A673 (cell line): ENCODE measurements at regions of chr1 and their contacts with region 1.

Region 1: GRCh38 chr1:36083993-36084738 is at the start of gene TEKT2:
- DNase-seq: peak; percentile 84
- H3K4me3 ChIP-seq: peak within 1 kb of the TSS; percentile 57
- H3K27ac ChIP-seq: peak within 1 kb of the TSS; percentile 64
- H3K4me1 ChIP-seq: no peaks in the 10 kb centered on the region
- H3K27me3 ChIP-seq: no peaks in the 10 kb centered on the region
- CTCF ChIP-seq: no peak
- total RNA-seq, gene TEKT2: 2.8 and 4.6 TPM in 2 replicates

Region 2: GRCh38 chr1:36109041-36109679 is 25.0 kb after region 1 on chr1:
- CTCF ChIA-PET with region 1: no interaction called
- POLR2A ChIA-PET with region 1: interaction called, 10 read pairs
- intact Hi-C with region 1: no loop called
- DNase-seq: no peak
- H3K4me3 ChIP-seq: no peak overlapping the region
- H3K27ac ChIP-seq: no peak overlapping the region
- H3K4me1 ChIP-seq: no peaks in the 10 kb centered on the region
- H3K27me3 ChIP-seq: no peaks in the 10 kb centered on the region
- CTCF ChIP-seq: no peak

Region 3: DNA sequence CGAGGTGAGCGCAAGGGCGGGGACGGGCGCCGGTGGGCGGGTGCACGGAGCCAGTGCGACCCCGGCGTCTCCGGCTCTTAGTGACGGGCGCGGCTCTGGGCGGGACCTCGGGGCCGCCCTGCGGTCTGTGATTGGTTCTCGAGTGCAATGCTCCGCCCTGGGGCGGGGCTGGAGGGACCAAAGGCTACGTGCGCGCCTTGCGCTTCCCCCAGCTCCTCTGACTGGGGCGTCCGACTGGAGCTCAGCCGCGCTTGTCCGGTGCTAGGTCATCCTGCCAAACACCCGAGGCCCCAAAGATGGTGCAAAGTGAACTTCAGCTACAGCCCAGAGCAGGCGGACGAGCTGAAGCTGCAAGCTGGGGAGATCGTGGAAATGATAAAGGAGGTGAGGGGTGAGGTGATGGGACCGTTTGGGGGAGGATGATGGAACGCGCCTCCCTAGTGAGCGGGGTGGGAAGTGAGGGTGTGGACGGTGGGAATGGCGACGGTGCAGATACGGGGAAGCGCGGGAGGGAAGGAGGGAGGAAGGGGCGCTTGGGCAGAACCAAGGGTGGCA is 222.8 kb after region 1 on chr1:
- CTCF ChIA-PET with region 1: no interaction called
- POLR2A ChIA-PET with region 1: interaction called, 13 read pairs
- intact Hi-C with region 1: no loop called
- DNase-seq: peak; percentile 95
- H3K4me3 ChIP-seq: peak overlapping the region; percentile 53
- H3K27ac ChIP-seq: peak overlapping the region; percentile 70
- H3K4me1 ChIP-seq: no peaks in the 10 kb centered on the region
- H3K27me3 ChIP-seq: no peaks in the 10 kb centered on the region
- CTCF ChIP-seq: no peak